Aorta (tissue), 5 donors: ENCODE measurements at regions of chr9 and their contacts with region 1.

Region 1: DNA sequence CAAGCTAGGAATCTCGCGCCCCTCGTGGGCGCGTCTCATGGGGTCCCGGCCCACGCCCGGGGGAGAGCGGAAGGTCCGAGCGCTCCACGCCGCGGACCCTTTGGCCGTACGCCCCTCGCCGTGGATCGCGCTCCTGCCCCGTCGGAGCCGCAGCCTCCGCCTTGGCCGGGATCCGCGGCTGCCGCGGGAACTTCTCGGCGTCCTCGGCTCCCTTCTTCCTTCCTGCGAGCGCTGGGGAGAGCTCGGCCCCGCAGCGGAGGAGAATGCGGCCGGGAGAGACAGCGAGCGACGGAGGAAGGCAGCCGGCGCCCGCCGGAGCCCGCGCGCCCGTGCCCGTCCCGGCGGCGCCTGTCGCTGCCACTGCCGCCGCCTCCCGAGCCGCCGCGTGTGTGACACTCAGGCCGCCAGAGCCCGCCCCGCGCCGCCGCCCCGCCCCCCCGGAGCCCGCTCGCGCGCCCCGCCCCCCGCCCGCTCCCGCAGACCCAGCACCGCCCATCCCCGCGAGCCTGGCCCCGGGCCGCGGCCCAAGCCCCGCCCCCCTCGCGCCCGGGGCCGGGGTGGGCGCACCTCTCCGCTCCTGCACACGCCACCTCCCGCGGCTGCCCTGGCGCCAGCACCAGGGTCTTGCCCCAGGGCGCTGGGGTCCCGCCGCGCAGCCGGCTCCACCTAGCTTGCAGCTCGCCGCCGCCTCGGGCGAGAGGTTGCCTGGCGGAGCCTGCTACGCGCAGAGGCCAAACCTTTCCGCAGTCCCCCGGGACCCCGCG is at the start of gene SHB:
- DNase-seq: peak; percentile 87 to 94
- ATAC-seq: peak; percentile 82
- H3K4me3 ChIP-seq: peak within 1 kb of the TSS; percentile 69 to 96
- H3K27ac ChIP-seq: peak within 1 kb of the TSS; percentile 62 to 88
- H3K4me1 ChIP-seq: peaks cover 0 to 5% of the 10 kb centered on the region in 2 donors
- H3K27me3 ChIP-seq: no peaks in the 10 kb centered on the region
- total RNA-seq, gene SHB: 28.7 to 29.3 TPM

Region 2: GRCh38 chr9:37800631-37801286 is 268.3 kb before region 1 on chr9 and contains the start of gene DCAF10:
- intact Hi-C with region 1: no loop called
- DNase-seq: peak; percentile 89 to 96
- ATAC-seq: peak; percentile 99
- H3K4me3 ChIP-seq: peak within 1 kb of the TSS; percentile 59 to 79
- H3K27ac ChIP-seq: peak within 1 kb of the TSS; percentile 30 to 45
- H3K4me1 ChIP-seq: peaks cover 0 to 4% of the 10 kb centered on the region in 2 donors
- H3K27me3 ChIP-seq: no peaks in the 10 kb centered on the region
- total RNA-seq, gene DCAF10: 27.7 to 29.5 TPM

Region 3: GRCh38 chr9:37920471-37921167 is 148.4 kb before region 1 on chr9:
- intact Hi-C with region 1: loop called in 1 of 2 experiments (anchors 5 kb)
- DNase-seq: peak in 1 of 2 donors; percentile 63
- ATAC-seq: no peak
- H3K4me3 ChIP-seq: no peak overlapping the region
- H3K27ac ChIP-seq: no peak overlapping the region
- H3K4me1 ChIP-seq: no peaks in the 10 kb centered on the region
- H3K27me3 ChIP-seq: no peaks in the 10 kb centered on the region

Region 4: GRCh38 chr9:37943329-37944265 is 125.5 kb before region 1 on chr9:
- intact Hi-C with region 1: loop called in 1 of 2 experiments (anchors 5 kb)
- DNase-seq: peak in 1 of 2 donors; percentile 79
- ATAC-seq: peak; percentile 47
- H3K4me3 ChIP-seq: no peak overlapping the region
- H3K27ac ChIP-seq: peak overlapping the region in 1 of 2 donors; percentile 66
- H3K4me1 ChIP-seq: peaks cover 0 to 7% of the 10 kb centered on the region in 2 donors
- H3K27me3 ChIP-seq: no peaks in the 10 kb centered on the region

Region 5: DNA sequence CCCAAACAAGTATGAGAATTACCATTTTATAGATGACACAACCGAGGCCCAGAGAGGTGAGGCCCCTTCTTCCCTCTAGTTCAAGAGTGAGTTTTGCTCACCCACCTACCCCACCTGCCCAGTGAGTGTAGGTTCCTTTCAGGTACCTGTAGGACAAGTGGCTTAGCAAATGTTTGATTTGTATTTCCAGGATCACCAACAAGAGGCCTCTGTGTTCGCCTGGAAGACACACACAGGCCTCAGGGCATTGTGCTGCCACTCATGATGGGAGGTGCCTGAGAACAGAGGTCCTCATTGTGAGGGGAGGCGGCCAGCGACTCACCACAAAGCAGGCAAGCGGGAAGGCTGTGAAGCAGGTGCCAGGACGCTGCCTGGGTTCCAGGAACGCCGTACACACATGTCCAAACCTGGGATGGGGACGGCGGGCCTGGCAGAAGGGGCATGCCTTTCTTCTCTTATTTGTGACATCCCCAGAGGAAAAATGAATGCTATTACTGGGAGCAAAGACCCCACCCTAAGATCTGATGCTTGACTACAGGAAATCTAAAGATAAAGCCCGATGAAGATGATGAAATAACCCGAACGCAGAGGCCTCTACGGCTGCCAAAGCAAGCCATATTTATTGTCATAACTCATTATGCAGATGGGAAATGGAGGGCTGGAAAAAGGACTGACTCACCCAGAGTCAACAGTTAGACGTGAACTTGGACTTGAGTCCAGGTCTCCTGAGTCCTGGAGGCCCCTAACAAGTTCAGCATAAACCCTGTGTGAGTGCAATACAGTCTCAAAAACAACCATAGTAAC is 104.9 kb before region 1 on chr9:
- intact Hi-C with region 1: loop called in 1 of 2 experiments (anchors 5 kb)
- DNase-seq: peak; percentile 87 to 90
- ATAC-seq: peak; percentile 81
- H3K4me3 ChIP-seq: no peak overlapping the region
- H3K27ac ChIP-seq: peak overlapping the region; percentile 87 to 94
- H3K4me1 ChIP-seq: peaks cover 2 to 3% of the 10 kb centered on the region in 2 donors
- H3K27me3 ChIP-seq: no peaks in the 10 kb centered on the region

Region 6: DNA sequence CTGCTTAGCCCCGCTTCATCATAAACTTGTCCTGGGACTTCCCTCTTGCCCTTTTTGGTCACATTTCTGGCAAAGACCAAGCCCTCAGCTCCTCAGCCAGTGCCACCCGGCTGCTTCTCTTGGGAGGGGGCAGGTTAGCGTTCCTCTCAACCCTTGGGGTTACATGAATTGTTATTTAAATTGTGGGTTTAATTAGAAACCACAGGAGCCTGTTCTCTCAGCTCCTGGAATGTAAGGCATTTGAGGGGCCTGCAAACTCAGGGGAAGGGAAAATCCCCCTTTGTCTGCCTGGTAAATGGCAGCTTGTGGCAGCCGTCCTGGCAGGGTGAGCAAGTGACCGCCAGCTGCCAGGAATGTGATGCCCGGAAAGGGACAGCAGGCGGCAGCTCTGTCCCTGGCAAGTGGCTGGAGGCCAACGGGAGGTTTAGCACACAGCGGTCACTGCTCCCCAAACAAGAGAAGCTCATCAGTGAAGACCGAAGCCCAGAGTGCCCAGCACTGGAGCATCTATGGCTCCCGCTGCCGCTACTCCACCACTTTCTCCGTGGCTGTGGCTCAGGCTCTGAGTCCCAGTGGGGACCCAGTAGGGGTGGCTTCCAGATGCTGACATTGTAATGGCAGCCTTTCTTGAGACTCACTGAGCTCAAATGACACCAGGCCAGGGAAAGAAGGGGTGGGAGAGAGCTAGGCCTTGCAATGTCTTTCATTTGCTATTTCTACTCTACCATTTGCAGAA is 51.7 kb before region 1 on chr9:
- intact Hi-C with region 1: loop called (anchors 2 to 5 kb)
- DNase-seq: peak; percentile 70 to 85
- ATAC-seq: peak; percentile 68
- H3K4me3 ChIP-seq: no peak overlapping the region
- H3K27ac ChIP-seq: peak overlapping the region in 1 of 2 donors; percentile 20
- H3K4me1 ChIP-seq: peaks cover 2 to 11% of the 10 kb centered on the region in 2 donors
- H3K27me3 ChIP-seq: no peaks in the 10 kb centered on the region

Region 7: GRCh38 chr9:38047301-38048251 is 21.5 kb before region 1 on chr9:
- intact Hi-C with region 1: no loop called
- DNase-seq: peak; percentile 72 to 79
- ATAC-seq: peak; percentile 73
- H3K4me3 ChIP-seq: no peak overlapping the region
- H3K27ac ChIP-seq: peak overlapping the region; percentile 78 to 92
- H3K4me1 ChIP-seq: peaks cover 0 to 3% of the 10 kb centered on the region in 2 donors
- H3K27me3 ChIP-seq: no peaks in the 10 kb centered on the region

Region 8: DNA sequence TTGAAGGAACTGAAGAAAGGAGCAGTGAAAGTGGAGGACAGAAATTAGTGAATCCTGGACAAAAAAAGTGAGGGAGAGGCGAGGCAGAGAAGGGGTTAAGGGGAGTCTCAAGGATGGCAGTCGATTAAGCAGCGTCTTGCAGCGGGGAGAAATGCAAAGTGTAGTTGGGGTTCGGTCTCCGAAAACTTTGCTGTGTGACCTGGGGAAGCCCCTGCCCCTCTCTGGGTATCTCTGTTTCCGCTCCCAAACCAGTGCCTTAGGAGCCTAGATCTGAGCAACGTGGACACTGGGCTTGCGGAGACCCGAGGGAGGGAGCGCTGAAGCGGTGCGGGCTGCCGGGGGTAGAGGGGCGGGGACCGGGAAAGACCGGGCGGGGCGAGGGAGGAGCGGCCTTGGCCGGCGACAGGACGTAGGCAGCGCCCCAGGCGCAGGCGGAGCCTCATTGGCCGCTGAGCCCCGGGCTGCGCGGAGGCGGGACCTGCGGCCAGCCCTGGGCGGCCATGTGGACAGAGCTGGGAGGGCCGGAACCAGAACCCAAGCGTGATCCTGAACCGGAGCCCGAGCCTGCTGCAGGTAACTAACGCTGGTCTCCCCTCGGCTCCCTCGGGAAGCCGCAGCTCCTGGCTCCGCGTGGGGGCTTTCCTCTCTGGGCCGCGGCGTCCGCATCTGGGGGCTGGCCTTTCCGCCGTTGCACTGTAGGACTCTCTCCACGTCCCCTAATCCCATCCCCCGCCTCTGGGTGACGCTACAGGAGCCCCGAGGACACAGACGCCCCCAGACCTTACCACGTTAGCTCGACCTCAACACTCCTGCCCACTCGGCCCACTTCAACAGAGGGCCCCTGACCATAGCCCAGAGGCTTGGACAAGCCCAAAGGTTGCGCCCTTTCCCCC is 323.4 kb after region 1 on chr9 and contains the start of gene ALDH1B1:
- intact Hi-C with region 1: loop called in 1 of 2 experiments (anchors 5 kb)
- DNase-seq: peak; percentile 93 to 97
- ATAC-seq: peak; percentile 93
- H3K4me3 ChIP-seq: peak within 1 kb of the TSS; percentile 56 to 67
- H3K27ac ChIP-seq: peak within 1 kb of the TSS; percentile 95 to 97
- H3K4me1 ChIP-seq: no peaks in the 10 kb centered on the region
- H3K27me3 ChIP-seq: no peaks in the 10 kb centered on the region
- total RNA-seq, gene ALDH1B1: 141 to 336 TPM